Transverse colon (tissue), 4 donors: ENCODE measurements at regions of chr9 and their contacts with region 1.

Region 1: DNA sequence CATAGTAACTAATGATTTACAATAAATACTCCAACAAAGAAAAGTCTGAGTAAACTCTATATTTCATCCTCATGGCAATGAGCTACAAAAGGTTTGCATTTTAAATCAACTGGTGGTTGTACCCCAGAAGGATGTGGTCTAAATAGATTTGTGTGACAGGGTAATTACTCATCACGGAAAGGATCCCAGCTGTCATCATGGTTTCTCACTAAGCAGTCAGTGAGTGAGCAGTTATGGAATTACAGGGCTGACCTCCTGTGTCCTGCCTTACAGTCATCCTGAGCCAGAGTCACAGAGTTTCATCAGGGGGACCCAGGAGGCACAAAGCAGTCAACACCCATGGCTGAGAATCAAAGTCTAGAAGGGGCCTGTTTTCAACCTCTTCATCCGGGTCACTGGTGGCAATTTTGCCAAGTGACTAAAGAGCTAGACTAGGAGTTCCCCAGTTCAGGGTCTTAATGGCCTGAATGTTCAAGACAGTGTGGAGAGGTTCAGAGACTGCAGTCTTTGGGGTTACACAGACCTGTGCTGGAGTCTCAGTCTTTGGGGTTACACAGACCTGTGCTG is 210.7 kb upstream of the SLC24A2 start:
- DNase-seq: no peak
- H3K4me3 ChIP-seq: no peak overlapping the region
- H3K27ac ChIP-seq: no peak overlapping the region
- H3K4me1 ChIP-seq: no peaks in the 10 kb centered on the region
- H3K27me3 ChIP-seq: no peaks in the 10 kb centered on the region
- CTCF ChIP-seq: no peak
- EP300 ChIP-seq: no peak
- POLR2A ChIP-seq: no peak

Region 2: DNA sequence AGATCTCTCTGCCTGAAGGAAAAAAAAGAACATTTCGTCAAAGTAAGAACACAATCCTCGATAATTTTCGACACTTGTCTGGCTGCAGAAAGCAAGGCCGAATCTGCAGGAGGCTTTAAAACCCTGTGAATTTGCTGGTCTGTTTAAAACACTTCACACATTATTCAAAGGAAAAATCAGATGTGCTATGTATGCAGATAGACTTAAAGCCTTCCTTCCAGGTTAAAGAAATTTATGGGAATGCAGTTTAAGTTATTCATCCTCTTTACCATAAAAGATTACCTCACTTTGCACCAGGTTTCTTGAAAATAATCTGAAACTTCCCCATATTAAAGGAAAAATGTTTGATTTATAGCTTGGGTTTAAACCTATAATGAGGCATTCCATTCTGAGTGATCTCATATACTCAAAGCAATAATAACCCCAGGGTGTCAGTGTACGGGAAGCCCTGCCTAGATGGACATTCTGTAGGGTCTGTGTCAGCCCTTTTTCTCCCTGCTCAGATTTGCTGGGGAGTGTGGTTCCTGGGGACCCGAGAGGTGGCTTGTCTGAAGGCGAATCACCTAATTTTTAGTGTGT is 112.7 kb after region 1 on chr9:
- in situ Hi-C with region 1: loop called in 1 of 4 experiments (anchors 25 kb)
- intact Hi-C with region 1: no loop called
- DNase-seq: no peak
- H3K4me3 ChIP-seq: no peak overlapping the region
- H3K27ac ChIP-seq: no peak overlapping the region
- H3K4me1 ChIP-seq: peaks cover 0 to 6% (median 1%) of the 10 kb centered on the region in 4 donors
- H3K27me3 ChIP-seq: no peaks in the 10 kb centered on the region
- CTCF ChIP-seq: no peak
- EP300 ChIP-seq: no peak
- POLR2A ChIP-seq: no peak